ENCODE measurements at regions of chr20 and their contacts with region 1.

Region 1: GRCh38 chr20:2086177-2086979 is 15.2 kb upstream of the STK35 start:
- DNase-seq: no peak
- ATAC-seq: no peak
- H3K4me3 ChIP-seq: no peak overlapping the region
- H3K27ac ChIP-seq: no peak overlapping the region
- H3K4me1 ChIP-seq: no peaks in the 10 kb centered on the region
- H3K27me3 ChIP-seq: peaks cover 0 to 9% (median 0%) of the 10 kb centered on the region in 3 donors
- CTCF ChIP-seq: no peak
- POLR2A ChIP-seq: no peak

Region 2: GRCh38 chr20:1888796-1889463 is 197.4 kb before region 1 on chr20:
- in situ Hi-C with region 1: no loop called
- intact Hi-C with region 1: no loop called
- DNase-seq: no peak
- ATAC-seq: no peak
- H3K4me3 ChIP-seq: no peak overlapping the region
- H3K27ac ChIP-seq: no peak overlapping the region
- H3K4me1 ChIP-seq: peaks cover 10 to 12% of the 10 kb centered on the region in 2 donors
- H3K27me3 ChIP-seq: no peaks in the 10 kb centered on the region
- CTCF ChIP-seq: no peak
- POLR2A ChIP-seq: no peak

Region 3: GRCh38 chr20:1934721-1935573 is 151.4 kb before region 1 on chr20:
- in situ Hi-C with region 1: no loop called
- intact Hi-C with region 1: no loop called
- DNase-seq: peak; percentile 60 to 84
- ATAC-seq: peak; percentile 77 to 85
- H3K4me3 ChIP-seq: no peak overlapping the region
- H3K27ac ChIP-seq: peak overlapping the region; percentile 47 to 63 (median 60)
- H3K4me1 ChIP-seq: peaks cover 0 to 29% of the 10 kb centered on the region in 2 donors
- H3K27me3 ChIP-seq: no peaks in the 10 kb centered on the region
- CTCF ChIP-seq: no peak
- POLR2A ChIP-seq: no peak

Region 4: GRCh38 chr20:1952737-1953530 is 133.4 kb before region 1 on chr20:
- in situ Hi-C with region 1: no loop called
- intact Hi-C with region 1: no loop called
- DNase-seq: no peak
- ATAC-seq: no peak
- H3K4me3 ChIP-seq: no peak overlapping the region
- H3K27ac ChIP-seq: no peak overlapping the region
- H3K4me1 ChIP-seq: peaks cover under 1 to 6% of the 10 kb centered on the region in 2 donors
- H3K27me3 ChIP-seq: no peaks in the 10 kb centered on the region
- CTCF ChIP-seq: no peak
- POLR2A ChIP-seq: no peak

Region 5: DNA sequence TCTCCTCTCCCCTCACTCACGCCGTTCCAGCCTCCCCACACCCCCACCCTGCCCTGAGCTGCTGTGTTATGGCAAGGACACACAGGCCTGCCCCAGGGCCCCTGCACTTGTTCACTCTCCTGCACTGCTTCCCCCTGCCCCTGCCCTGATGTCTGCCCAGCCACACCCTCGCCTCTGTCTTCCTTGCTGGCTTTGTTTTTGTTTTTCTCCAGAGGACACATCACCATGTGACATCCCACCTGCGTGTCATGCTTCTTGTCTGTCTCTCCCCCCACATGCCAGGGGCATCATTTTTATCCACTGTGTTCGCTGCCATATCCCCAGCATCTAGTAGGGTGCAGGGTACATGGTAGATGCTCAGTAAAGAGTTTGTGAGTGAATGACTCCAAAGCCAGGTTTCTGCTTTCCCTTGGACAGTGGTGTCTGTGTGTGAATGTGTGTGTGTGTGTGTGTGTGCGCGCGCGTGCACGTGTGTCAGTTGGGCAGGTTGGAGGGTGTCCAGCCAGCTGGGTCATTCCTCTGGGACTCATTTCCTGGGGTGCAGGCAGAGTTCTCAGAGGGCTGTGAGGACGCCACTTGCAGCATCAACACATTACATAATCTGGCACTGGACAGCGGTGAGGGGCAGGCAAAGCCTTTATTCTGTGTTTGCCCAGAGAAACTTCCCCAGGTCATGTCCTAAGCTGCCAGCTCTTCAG is 75.9 kb after region 1 on chr20:
- in situ Hi-C with region 1: loop called in 1 of 4 experiments (anchors 10 kb)
- intact Hi-C with region 1: no loop called
- DNase-seq: no peak
- ATAC-seq: no peak
- H3K4me3 ChIP-seq: no peak overlapping the region
- H3K27ac ChIP-seq: no peak overlapping the region
- H3K4me1 ChIP-seq: no peaks in the 10 kb centered on the region
- H3K27me3 ChIP-seq: no peaks in the 10 kb centered on the region
- CTCF ChIP-seq: no peak
- POLR2A ChIP-seq: no peak

Measured in gastrocnemius medialis (tissue), 4 donors.